IMR-90 (cell line): ENCODE measurements at regions of chr17 and their contacts with region 1.

Region 1: DNA sequence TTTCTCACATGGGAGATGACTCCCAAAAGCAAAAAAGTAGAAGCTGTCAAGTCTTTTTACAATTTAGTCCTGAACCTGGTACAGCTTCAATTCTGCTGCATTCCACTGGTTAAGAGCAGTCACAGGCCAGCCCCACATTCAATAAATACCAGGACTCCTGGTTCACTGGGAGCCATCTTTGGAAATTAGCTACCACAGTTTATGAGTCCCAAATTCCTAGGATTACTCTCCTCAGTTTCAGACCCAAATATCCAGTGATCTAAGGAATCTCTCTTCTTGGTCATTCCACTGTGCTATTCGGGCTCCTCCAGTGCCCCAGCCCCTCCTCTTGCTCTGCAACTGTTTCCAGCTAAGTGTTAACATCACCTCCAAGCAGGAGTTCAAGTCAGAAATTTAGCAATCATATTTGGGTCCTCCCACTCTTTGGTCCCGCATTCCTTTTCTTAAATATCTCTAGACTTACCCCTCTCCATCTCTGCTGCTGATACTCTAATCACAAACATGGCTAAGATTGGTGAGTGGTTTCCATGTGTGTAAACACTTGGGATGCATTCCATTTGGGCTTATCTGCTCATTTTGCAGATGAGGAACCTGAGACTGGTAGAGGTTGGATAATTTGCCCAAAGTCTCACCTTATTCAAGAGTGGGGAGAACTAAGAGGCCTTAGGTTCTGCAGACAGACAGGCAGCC is 9.6 kb upstream of the WIPF2 start:
- DNase-seq: peak; percentile 54
- ATAC-seq: peak; percentile 94
- H3K4me3 ChIP-seq: no peak overlapping the region
- H3K27ac ChIP-seq: peak overlapping the region; percentile 79; the same call in 1 of the 2 replicates
- H3K4me1 ChIP-seq: peaks cover 12% of the 10 kb centered on the region
- H3K27me3 ChIP-seq: no peaks in the 10 kb centered on the region
- CTCF ChIP-seq: no peak
- POLR2A ChIP-seq: no peak
- RAD21 ChIP-seq: no peak

Region 2: GRCh38 chr17:40168262-40168832 is 41.2 kb before region 1 on chr17:
- CTCF ChIA-PET with region 1: no interaction called
- POLR2A ChIA-PET with region 1: no interaction called
- dilution Hi-C with region 1: no loop called
- in situ Hi-C with region 1: no loop called
- intact Hi-C with region 1: no loop called
- DNase-seq: peak; percentile 69
- ATAC-seq: peak; percentile 96
- H3K4me3 ChIP-seq: no peak overlapping the region
- H3K27ac ChIP-seq: no peak overlapping the region
- H3K4me1 ChIP-seq: peaks cover 6% of the 10 kb centered on the region
- H3K27me3 ChIP-seq: no peaks in the 10 kb centered on the region
- CTCF ChIP-seq: peak; percentile 76
- POLR2A ChIP-seq: no peak
- RAD21 ChIP-seq: peak; percentile 76

Region 3: GRCh38 chr17:40251576-40251975 is 42.0 kb after region 1 on chr17:
- CTCF ChIA-PET with region 1: interaction called, 3 read pairs
- POLR2A ChIA-PET with region 1: no interaction called
- dilution Hi-C with region 1: no loop called
- in situ Hi-C with region 1: loop called (anchors 5 kb)
- intact Hi-C with region 1: loop called (anchors 10 kb)
- DNase-seq: peak; percentile 85
- ATAC-seq: peak; percentile 86
- H3K4me3 ChIP-seq: no peak overlapping the region
- H3K27ac ChIP-seq: no peak overlapping the region
- H3K4me1 ChIP-seq: 0 out of 2 replicates have a peak, but pooled peaks cover 3% of the 10 kb centered on the region
- H3K27me3 ChIP-seq: no peaks in the 10 kb centered on the region
- CTCF ChIP-seq: no peak
- POLR2A ChIP-seq: no peak
- RAD21 ChIP-seq: no peak

Region 4: GRCh38 chr17:40560592-40561293 is 351.2 kb after region 1 on chr17:
- CTCF ChIA-PET with region 1: no interaction called
- POLR2A ChIA-PET with region 1: no interaction called
- dilution Hi-C with region 1: no loop called
- in situ Hi-C with region 1: no loop called
- intact Hi-C with region 1: no loop called
- DNase-seq: peak; percentile 57
- ATAC-seq: no peak
- H3K4me3 ChIP-seq: no peak overlapping the region
- H3K27ac ChIP-seq: peak overlapping the region; percentile 36
- H3K4me1 ChIP-seq: peaks cover 28% of the 10 kb centered on the region
- H3K27me3 ChIP-seq: peaks cover 28% of the 10 kb centered on the region
- CTCF ChIP-seq: no peak
- POLR2A ChIP-seq: no peak
- RAD21 ChIP-seq: no peak